KBM-7 (cell line): ENCODE measurements at regions of chr6 and their contacts with region 1.

Region 1: GRCh38 chr6:136201732-136202131 is 48.4 kb downstream of the MTFR2 start:
- DNase-seq: no peak

Region 2: DNA sequence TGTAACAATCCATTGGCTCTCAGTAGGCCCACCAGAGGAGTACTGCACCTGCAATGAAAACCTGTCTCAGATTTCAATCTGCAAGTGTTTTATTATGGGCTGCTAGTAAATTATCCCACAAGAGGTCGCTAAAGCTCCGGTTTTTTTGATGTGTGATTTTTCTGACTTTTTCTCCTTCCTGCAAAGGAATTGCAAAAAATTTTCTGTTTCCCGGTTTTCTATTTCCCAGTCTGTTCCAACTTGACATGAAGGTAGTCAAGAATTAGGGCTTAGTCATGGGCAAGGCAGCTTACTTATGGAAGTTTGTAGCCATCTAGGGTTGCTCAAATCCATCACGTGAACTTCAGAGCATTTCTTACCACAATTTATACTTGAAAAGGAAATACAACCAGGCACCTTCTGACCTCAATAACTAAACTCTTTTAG is 665.7 kb before region 1 on chr6:
- in situ Hi-C with region 1: loop called (anchors 25 kb)
- DNase-seq: peak; percentile 71

Region 3: DNA sequence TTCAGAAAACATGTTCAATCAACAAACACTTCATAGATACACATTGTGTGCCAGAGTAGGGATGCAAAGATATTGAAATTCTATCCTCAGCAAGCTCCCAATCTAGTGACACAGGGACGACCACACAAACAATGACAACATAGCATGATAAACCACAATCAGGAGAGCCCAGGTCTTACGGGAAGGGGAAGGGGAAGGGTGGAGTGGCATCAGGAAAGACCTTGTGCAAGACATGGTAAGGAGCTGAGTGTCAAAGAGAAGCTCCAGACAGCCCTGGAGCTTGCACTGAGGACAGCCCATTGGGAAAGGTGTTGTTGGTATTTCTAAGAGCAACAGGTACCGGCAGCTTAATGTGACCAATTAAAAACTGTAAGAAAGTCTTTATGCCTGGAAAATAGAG is 246.6 kb before region 1 on chr6:
- in situ Hi-C with region 1: no loop called
- DNase-seq: no peak